Activated naive CD4-positive, alpha-beta T cell treated with anti-CD3 and anti-CD28 coated beads for 36 hours (primary cell): ENCODE measurements at regions of chr6 and their contacts with region 1.

Region 1: DNA sequence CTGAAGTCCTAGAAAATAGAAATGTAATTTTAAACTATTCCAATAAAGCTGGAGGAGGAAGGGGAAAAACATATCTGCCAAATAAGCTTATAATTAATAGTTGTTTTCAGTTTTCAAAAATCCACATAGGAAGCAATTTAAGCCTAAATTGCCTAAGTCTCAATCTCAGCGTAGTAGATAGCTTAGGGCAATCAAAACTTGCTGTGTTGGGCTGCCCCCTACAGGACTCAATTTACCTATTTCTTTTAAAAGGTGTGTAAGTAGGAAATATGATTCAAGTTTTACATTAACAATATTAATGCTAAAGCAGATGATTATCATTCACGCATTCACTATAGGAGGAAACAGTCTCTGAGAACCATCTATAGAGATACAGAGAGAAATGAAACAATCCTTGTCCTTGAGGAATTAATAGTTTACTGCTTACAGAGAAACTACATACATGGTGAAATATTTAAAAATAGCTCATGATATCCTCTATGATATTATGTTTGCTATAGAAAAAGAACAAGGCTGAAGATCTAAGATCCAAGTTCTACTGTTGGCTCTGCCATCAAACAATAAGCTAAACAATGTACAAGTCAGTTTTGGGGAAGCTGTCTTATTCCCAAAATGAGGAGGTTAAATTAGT is 102.1 kb downstream of the ATG5 start:
- DNase-seq: peak; percentile 89
- H3K4me3 Mint-ChIP-seq: no peak overlapping the region
- H3K27ac Mint-ChIP-seq: no peak overlapping the region
- H3K4me1 Mint-ChIP-seq: peaks cover 18% of the 10 kb centered on the region
- H3K27me3 Mint-ChIP-seq: no peaks in the 10 kb centered on the region

Region 2: DNA sequence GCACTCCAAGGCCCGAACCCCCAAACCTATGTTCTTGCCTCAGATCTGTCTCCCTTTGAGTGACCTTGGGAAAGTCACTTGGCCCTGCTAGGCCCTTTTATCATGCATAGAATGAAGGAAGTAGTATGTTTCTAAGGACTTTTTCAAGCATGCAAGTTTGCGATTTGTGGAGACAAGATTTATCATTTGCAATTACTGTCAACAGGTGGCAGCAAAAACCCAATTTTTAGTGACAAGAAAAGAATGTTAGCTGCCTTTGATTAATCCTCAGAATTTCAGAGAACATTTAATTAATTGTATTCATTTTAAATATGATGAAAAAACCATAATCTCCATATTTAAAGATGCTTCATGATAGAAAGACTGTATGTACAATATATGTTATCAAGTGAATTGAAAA is 792.2 kb before region 1 on chr6:
- CTCF ChIA-PET with region 1: interaction called, 9 read pairs
- intact Hi-C with region 1: loop called (anchors 1 kb)
- DNase-seq: peak; percentile 10
- H3K4me3 Mint-ChIP-seq: no peak overlapping the region
- H3K27ac Mint-ChIP-seq: no peak overlapping the region
- H3K4me1 Mint-ChIP-seq: no peaks in the 10 kb centered on the region
- H3K27me3 Mint-ChIP-seq: peaks cover 7% of the 10 kb centered on the region

Region 3: DNA sequence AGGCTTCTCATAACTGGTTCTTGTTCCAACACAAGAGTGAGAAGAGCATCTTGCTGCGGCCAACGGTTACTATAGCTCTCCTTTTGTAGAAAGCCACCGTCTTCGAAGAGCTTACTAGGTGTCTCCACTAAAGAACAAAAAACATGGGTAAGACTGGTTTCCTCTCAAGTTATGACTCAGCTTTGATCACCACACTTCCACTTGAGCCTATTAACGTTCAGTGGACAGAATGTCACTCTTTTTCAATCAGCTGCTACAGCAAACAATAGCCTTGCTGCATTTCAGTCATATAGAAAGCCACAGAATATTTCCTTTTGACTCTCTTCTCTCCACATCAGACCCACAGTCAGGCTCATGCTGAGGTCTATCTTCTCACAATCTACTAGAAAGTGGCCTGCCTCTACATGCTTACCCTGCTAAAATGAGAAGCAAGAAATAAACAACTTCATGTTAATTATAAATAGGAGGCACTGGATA is 577.0 kb before region 1 on chr6:
- CTCF ChIA-PET with region 1: no interaction called
- intact Hi-C with region 1: loop called (anchors 10 kb)
- DNase-seq: peak; percentile 35
- H3K4me3 Mint-ChIP-seq: no peak overlapping the region
- H3K27ac Mint-ChIP-seq: no peak overlapping the region
- H3K4me1 Mint-ChIP-seq: peaks cover 46% of the 10 kb centered on the region
- H3K27me3 Mint-ChIP-seq: peaks cover 20% of the 10 kb centered on the region

Region 4: DNA sequence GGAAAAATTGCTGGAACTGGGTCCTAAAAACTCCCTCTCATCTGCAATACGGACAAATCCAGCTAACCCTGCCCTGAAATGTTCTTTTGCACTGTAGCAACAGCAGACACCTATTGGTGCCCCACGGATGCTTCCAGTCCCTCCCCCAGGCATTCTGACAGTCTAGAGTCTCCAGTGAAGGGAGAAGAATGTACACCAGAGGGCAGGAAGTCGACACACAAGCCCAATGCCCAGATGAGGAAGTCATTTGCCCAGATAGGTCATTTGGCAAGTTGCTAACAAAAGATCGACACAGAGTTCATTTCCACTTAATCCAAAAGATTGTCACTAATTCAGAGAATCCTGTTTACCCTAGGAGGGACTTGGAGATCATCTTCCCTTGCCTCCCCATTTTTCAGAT is 430.3 kb before region 1 on chr6:
- CTCF ChIA-PET with region 1: interaction called, 5 read pairs
- intact Hi-C with region 1: loop called (anchors 2 kb)
- DNase-seq: peak; percentile 30
- H3K4me3 Mint-ChIP-seq: no peak overlapping the region
- H3K27ac Mint-ChIP-seq: no peak overlapping the region
- H3K4me1 Mint-ChIP-seq: peaks cover 43% of the 10 kb centered on the region
- H3K27me3 Mint-ChIP-seq: no peaks in the 10 kb centered on the region

Region 5: GRCh38 chr6:105992315-105992961 is 231.0 kb before region 1 on chr6:
- CTCF ChIA-PET with region 1: interaction called, 21 read pairs
- intact Hi-C with region 1: loop called (anchors 1 kb)
- DNase-seq: peak; percentile 90
- H3K4me3 Mint-ChIP-seq: peak overlapping the region; percentile 88
- H3K27ac Mint-ChIP-seq: peak overlapping the region; percentile 74
- H3K4me1 Mint-ChIP-seq: peaks cover 22% of the 10 kb centered on the region
- H3K27me3 Mint-ChIP-seq: peaks cover 72% of the 10 kb centered on the region

Region 6: DNA sequence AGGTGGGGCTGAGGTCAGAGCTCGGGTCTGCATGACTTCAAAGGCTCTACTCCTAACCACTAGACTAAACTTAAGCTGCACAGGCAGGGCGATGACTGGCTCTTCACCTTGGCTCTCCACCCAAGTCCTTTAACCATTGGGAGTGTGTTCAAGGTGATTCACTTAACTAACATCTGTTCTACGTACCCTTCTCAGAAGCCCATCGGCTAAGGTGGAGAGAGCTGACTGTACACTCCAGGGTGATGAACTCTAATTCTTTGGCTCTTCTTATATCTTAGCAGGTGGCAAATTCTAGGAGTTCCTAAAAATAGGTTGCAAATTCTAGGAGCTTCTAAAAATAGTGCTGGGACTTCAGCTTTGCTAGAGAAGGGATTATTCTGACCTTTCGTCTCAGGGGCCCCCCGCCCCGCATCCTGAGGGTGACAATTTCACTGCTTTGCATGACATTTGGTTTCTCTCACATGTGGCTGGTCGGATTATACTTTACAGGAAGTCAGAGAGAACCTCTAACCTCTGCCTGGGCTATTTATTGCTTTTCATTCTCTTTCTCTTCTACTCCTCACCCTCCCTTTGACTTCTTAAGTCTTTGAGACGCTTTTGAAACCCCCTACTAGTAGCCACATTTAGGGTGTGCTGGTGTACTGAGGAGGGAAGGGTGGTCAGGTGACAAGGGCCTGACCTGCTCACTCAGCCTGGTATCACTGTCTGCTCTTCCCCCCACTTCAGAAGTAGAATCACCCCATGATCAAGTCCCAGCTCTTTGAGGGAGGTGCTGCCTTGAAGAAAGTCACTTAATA is 81.8 kb before region 1 on chr6:
- CTCF ChIA-PET with region 1: interaction called, 8 read pairs
- intact Hi-C with region 1: loop called (anchors 2 kb)
- DNase-seq: peak; percentile 75
- H3K4me3 Mint-ChIP-seq: peak overlapping the region; percentile 13
- H3K27ac Mint-ChIP-seq: peak overlapping the region; percentile 83
- H3K4me1 Mint-ChIP-seq: peaks cover 31% of the 10 kb centered on the region
- H3K27me3 Mint-ChIP-seq: no peaks in the 10 kb centered on the region

Region 7: DNA sequence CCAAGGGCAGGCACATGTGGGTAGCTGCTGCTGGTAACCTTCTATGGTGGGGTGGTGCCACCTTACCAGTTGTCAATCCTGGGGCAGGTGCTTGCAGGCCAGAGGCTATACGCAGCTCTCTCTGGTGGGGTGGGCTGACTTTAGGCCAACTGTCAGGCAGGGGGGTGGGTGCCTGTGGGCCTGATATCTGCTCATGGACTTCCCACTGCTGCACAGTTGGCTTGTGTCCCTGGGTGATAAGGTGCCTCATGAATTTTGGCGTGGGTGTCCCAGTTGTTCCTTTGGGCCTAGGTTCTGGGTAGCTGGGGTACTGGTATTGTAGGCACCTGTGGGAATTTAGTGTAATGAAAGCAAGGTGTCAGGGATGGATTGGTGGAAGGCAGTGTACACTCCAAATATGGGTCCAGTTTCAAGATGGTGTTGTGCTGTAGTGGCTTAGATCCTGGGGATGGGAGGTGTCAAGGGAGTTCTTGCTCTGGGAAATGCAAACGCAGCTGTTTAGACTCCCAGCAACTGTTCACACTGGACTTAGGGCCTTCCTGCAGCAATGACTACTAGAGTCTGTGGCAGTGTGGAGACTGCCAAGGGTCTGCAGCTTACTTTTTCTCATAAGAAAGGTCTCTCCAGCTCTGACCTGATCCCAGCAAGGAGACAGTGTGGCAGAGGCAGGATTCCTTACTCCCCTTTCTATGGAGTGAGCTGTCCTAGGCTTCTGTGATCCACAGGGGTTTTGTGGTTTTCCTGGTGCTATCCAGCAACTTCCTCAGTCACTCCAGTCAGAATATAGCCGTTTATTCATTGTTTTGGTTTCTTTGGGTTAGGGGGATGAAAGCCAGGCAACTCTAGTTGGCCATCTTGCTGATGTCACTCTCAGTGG is 265.3 kb after region 1 on chr6:
- CTCF ChIA-PET with region 1: no interaction called
- intact Hi-C with region 1: no loop called
- DNase-seq: no peak
- H3K4me3 Mint-ChIP-seq: no peak overlapping the region
- H3K27ac Mint-ChIP-seq: no peak overlapping the region
- H3K4me1 Mint-ChIP-seq: peaks cover 7% of the 10 kb centered on the region
- H3K27me3 Mint-ChIP-seq: no peaks in the 10 kb centered on the region

Region 8: GRCh38 chr6:107539409-107539808 is 1316.0 kb after region 1 on chr6:
- CTCF ChIA-PET with region 1: no interaction called
- intact Hi-C with region 1: no loop called
- DNase-seq: no peak
- H3K4me3 Mint-ChIP-seq: no peak overlapping the region
- H3K27ac Mint-ChIP-seq: no peak overlapping the region
- H3K4me1 Mint-ChIP-seq: no peaks in the 10 kb centered on the region
- H3K27me3 Mint-ChIP-seq: peaks cover 17% of the 10 kb centered on the region